ENCODE measurements at regions of chr14 and their contacts with region 1.

Region 1: DNA sequence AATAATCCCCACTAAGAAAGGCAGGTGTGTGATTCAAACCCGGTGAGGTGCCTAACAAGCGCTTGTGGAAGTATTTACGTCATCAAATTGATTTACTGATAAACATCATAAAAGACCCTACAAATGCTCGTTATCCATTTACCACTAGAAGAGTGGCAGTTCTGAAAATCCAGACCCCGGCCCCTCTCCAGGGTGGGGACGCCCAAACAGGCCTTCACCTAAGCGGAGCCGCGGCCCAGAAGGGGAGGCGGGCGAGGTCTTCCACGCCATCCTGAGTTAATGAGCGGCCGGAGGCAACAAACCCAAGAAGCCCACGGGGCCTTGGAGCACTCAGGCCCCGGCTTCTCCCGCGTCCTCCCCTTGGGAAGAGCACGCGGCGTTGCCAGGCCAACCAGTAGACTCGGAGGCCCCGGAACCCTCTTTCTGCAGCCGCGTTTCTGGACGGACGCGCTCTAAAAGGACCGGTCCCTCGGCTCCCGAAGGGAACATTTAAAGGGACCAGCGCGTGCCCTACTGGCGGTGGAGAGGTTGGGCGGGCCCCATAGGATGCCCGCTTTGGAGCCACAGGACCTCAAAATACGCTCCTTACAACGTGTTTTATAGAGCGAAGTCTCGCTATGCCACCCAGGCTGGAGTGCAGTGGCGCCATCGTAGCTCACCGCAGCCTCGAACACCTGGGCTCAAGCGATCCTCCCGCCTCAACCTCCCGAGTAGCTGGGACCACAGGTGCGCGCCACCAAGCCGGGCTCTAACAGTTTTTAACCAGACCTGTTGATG is 3.5 kb downstream of the PTPN21 start:
- DNase-seq: peak; percentile 80 to 97 (median 86)

Region 2: GRCh38 chr14:88013750-88014349 is 537.4 kb before region 1 on chr14:
- intact Hi-C with region 1: loop called (anchors 10 kb)
- DNase-seq: peak; percentile 34 to 95 (median 67)

Region 3: DNA sequence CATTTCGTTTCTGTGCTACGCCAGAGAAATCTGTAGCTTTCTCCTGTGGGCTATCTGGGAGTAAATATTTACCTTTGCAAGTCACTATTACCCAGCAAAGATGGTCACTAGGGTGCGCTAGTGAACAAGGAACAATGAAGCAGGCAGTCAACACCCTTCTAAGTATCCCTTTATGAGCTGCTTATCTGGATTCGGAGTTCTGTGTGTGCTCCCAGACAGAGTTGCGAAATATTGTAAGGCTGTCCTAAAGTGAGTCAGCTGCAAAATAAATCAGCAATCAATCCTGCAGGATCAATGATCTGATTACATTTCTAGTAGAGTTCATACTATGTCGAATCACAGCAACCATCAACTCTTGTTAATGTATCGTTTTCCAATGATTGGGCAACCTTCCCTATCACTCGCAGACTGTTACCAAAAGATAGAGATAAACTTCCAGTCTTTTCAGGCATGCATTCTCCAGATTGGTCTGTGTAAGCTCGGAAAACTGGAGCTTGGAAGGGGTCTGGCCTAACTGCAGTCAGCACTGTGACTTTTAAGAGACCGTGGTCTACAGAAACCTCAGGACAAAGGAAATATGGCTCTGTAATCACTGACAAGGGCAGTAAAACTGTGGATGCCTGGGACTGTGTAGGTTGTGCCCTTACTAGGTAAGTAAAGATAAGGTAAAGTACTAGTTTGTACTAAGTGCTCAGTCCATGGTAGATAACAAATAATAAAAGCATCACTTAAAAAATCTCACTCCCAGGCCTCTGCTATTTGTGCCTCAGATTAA is 361.7 kb before region 1 on chr14:
- intact Hi-C with region 1: loop called (anchors 10 kb)
- DNase-seq: peak in 5 of 10 donors; percentile 32 to 83 (median 72)

Region 4: GRCh38 chr14:88385345-88386101 is 165.8 kb before region 1 on chr14 and contains the start of gene SPATA7:
- intact Hi-C with region 1: loop called (anchors 5 kb)
- DNase-seq: peak; percentile 95 to 99 (median 97)

Region 5: GRCh38 chr14:88492272-88493089 is 58.8 kb before region 1 on chr14:
- intact Hi-C with region 1: loop called (anchors 5 kb)
- DNase-seq: peak in 5 of 10 donors; percentile 31 to 88 (median 50)

Region 6: GRCh38 chr14:88706425-88706824 is 155.1 kb after region 1 on chr14:
- intact Hi-C with region 1: no loop called
- DNase-seq: no peak

Region 7: GRCh38 chr14:89954070-89955028 is 1403.1 kb after region 1 on chr14 and contains the start of gene EFCAB11:
- intact Hi-C with region 1: loop called (anchors 10 kb)
- DNase-seq: peak; percentile 96 to 100 (median 98)